GM12878 (cell line): ENCODE measurements at regions of chr9 and their contacts with region 1.

Region 1: DNA sequence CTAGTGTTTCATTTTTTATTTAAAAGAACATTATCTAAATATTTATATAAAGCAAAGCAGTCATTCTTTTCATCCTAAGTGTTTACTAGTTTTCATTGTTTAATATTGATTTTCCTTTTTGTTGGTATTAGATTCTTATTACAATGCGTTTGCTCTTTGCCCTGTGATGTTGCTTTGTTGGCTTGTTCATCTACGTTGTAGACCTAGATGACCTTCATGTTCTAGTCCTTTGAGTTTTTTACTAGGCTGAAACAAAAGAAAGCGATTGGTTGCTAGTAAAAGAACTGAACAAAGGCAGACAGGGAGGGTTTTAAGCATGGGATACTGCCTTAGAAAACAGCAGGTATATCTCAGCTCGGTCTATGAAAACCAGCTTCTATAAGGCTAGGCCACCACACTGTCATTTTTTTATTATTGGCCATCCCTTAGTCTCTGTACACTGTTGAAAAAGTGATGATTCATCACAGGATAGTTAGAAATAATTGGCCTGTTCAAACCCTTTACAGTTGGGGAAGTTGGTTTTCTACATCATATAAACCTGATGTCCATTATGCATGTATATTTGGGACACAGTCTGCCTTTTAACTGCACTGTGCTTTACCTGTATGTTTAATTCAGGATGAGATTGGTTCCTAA is 119.0 kb downstream of the ZCCHC7 start:
- DNase-seq: no peak
- ATAC-seq: peak; percentile 81
- H3K4me3 ChIP-seq: no peak overlapping the region
- H3K27ac ChIP-seq: no peak overlapping the region
- H3K4me1 ChIP-seq: peaks cover 25% of the 10 kb centered on the region
- H3K27me3 ChIP-seq: no peaks in the 10 kb centered on the region
- CTCF ChIP-seq: no peak
- EP300 ChIP-seq: no peak
- POLR2A ChIP-seq: no peak
- RAD21 ChIP-seq: no peak

Region 2: DNA sequence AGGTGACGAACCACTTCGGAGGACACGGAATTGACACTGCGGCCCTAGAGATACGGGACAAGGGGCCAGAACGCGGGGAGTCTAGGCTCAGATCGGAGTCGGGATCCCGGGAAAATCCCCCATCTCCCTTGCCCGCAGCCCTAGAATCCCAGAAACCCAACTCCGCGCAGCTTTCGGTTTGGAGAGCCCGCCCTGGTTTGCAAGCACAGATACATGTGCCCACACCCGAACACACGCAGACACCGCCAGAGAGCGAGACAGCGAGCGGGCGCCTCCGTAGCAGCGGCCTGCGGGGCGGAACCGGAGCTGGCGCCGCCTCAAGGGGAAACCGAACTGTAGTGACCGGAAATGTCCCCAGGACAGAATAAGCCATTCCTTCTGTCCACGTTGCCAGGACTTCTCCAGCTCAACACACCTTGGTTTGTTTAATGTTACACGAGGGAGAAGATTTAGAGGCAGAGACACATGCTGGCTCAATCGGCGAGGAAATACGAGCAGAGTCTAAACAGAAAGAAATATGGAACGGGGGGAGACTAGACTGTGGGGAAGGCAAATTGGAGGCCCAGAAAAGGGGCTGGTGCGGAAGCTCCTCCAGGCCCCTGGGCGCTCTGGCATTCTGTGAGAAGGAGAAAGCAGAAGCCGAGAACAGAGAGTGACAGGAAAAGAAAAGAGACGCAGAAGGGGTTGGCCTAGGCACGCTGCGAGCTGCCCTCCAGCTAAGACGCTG is 202.4 kb before region 1 on chr9:
- CTCF ChIA-PET with region 1: no interaction called
- POLR2A ChIA-PET with region 1: no interaction called
- RAD21 ChIA-PET with region 1: no interaction called
- SMC1A ChIA-PET with region 1: no interaction called
- in situ Hi-C with region 1: no loop called
- intact Hi-C with region 1: no loop called
- DNase-seq: no peak
- ATAC-seq: peak; percentile 52
- H3K4me3 ChIP-seq: peak overlapping the region; percentile 96
- H3K27ac ChIP-seq: peak overlapping the region; percentile 92
- H3K4me1 ChIP-seq: peaks cover 8% of the 10 kb centered on the region
- H3K27me3 ChIP-seq: no peaks in the 10 kb centered on the region
- CTCF ChIP-seq: 0 out of 6 replicates have a peak, but pooled peaks of 1 of the 3 experiments have one; percentile 2
- EP300 ChIP-seq: no peak
- POLR2A ChIP-seq: 0 out of 2 replicates have a peak, but pooled peaks have one; percentile 2
- RAD21 ChIP-seq: no peak

Region 3: DNA sequence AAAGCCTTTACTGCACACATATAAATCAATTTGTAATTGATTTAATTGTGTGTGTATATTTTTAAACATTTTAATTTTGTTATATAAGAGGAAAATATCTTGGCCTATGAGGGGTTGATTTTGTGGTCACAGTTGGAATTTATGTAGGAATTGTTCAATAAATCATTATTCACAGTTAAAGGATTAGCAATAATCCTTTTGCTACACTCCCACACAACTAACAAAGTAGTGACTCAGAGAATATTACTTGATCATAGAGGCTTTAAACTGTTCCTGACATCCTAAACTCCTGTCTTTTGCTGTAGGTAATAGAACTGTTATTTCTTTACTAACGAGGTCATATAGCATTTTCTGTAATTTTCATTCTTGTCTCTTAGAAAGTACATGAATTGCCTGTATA is 23.5 kb before region 1 on chr9:
- CTCF ChIA-PET with region 1: interaction called, 6 read pairs
- POLR2A ChIA-PET with region 1: interaction called, 6 read pairs
- RAD21 ChIA-PET with region 1: interaction called, 6 read pairs
- SMC1A ChIA-PET with region 1: interaction called, 11 read pairs
- in situ Hi-C with region 1: no loop called
- intact Hi-C with region 1: no loop called
- DNase-seq: no peak
- ATAC-seq: no peak
- H3K4me3 ChIP-seq: no peak overlapping the region
- H3K27ac ChIP-seq: no peak overlapping the region
- H3K4me1 ChIP-seq: peaks cover 3% of the 10 kb centered on the region
- H3K27me3 ChIP-seq: no peaks in the 10 kb centered on the region
- CTCF ChIP-seq: no peak
- EP300 ChIP-seq: no peak
- POLR2A ChIP-seq: no peak
- RAD21 ChIP-seq: no peak

Region 4: GRCh38 chr9:37251452-37251851 is 12.1 kb after region 1 on chr9:
- CTCF ChIA-PET with region 1: interaction called, 7 read pairs
- POLR2A ChIA-PET with region 1: interaction called, 7 read pairs
- RAD21 ChIA-PET with region 1: no interaction called
- SMC1A ChIA-PET with region 1: interaction called, 62 read pairs
- in situ Hi-C with region 1: no loop called
- intact Hi-C with region 1: loop called (anchors 1 kb)
- DNase-seq: no peak
- ATAC-seq: peak; percentile 97
- H3K4me3 ChIP-seq: no peak overlapping the region
- H3K27ac ChIP-seq: peak overlapping the region; percentile 14; the same call in 1 of the 2 replicates
- H3K4me1 ChIP-seq: peaks cover 5% of the 10 kb centered on the region
- H3K27me3 ChIP-seq: no peaks in the 10 kb centered on the region
- CTCF ChIP-seq: no peak
- EP300 ChIP-seq: no peak
- POLR2A ChIP-seq: no peak
- RAD21 ChIP-seq: no peak

Region 5: DNA sequence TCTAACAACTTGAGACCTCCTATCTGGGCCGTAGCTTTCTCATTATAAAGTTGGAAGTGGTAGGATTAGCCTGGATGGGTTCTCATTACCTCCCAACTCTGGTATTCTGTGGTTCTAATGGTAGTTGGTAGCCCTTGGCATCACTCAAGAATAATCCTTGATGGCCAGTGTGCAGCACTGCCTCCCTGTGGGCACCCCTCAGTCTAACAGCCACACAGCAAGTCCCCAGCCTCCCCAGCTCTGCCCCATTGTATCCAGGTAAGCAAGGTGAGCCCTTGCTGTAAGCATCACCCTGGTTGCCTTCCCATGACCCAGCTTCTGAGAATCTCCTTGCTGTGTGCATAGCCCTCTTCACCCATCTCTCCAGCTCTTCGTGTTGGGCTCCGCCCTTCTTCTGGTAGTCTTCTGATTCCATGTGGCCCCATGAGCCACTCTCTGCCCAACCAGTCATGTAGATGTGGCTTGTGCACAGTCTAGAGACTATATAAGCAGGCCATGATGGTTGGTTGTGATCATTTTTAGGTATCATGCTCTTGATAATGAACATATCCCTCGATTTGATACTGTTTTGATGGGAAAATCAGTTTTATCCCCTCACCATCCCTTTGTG is 125.5 kb after region 1 on chr9:
- CTCF ChIA-PET with region 1: no interaction called
- POLR2A ChIA-PET with region 1: no interaction called
- RAD21 ChIA-PET with region 1: no interaction called
- SMC1A ChIA-PET with region 1: no interaction called
- in situ Hi-C with region 1: no loop called
- intact Hi-C with region 1: no loop called
- DNase-seq: no peak
- ATAC-seq: peak; percentile 67
- H3K4me3 ChIP-seq: no peak overlapping the region
- H3K27ac ChIP-seq: no peak overlapping the region
- H3K4me1 ChIP-seq: peaks cover 19% of the 10 kb centered on the region
- H3K27me3 ChIP-seq: no peaks in the 10 kb centered on the region
- CTCF ChIP-seq: peak; percentile 26 to 53 (median 48); a peak in 5 of 6 replicates
- EP300 ChIP-seq: no peak
- POLR2A ChIP-seq: no peak
- RAD21 ChIP-seq: peak; percentile 42; the same call in 1 of the 2 replicates

Region 6: GRCh38 chr9:38195737-38196161 is 956.4 kb after region 1 on chr9:
- CTCF ChIA-PET with region 1: no interaction called
- POLR2A ChIA-PET with region 1: no interaction called
- RAD21 ChIA-PET with region 1: no interaction called
- SMC1A ChIA-PET with region 1: no interaction called
- in situ Hi-C with region 1: no loop called
- intact Hi-C with region 1: no loop called
- DNase-seq: no peak
- ATAC-seq: no peak
- H3K4me3 ChIP-seq: no peak overlapping the region
- H3K27ac ChIP-seq: no peak overlapping the region
- H3K4me1 ChIP-seq: no peaks in the 10 kb centered on the region; the same call in 1 of the 2 replicates
- H3K27me3 ChIP-seq: no peaks in the 10 kb centered on the region; a peak in 1 of 4 replicates
- CTCF ChIP-seq: no peak
- EP300 ChIP-seq: no peak
- POLR2A ChIP-seq: no peak
- RAD21 ChIP-seq: no peak